Left cardiac atrium (tissue), 4 donors: ENCODE measurements at regions of chr6 and their contacts with region 1.

Region 1: GRCh38 chr6:142236691-142237090 is 65.1 kb upstream of the ADGRG6 start:
- DNase-seq: no peak
- ATAC-seq: no peak

Region 2: DNA sequence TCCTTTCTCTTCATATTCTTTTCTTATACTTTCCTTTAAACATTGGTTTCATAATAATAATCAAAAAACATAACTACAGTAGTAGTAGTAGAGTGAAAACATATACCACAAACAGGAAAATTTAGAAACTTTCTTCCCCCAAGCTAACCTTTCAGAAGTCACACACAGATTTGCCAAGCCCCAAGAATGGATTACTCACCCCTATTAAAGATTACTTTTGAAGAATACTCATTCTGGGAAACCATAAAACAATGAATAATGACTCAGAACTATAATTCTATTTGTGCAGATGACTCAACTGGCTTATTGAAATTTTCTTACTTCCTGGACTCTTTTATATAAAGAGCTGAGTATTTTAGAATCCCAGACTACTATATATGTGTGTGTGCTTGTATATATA is 223.4 kb before region 1 on chr6:
- intact Hi-C with region 1: no loop called
- DNase-seq: no peak
- ATAC-seq: no peak

Region 3: DNA sequence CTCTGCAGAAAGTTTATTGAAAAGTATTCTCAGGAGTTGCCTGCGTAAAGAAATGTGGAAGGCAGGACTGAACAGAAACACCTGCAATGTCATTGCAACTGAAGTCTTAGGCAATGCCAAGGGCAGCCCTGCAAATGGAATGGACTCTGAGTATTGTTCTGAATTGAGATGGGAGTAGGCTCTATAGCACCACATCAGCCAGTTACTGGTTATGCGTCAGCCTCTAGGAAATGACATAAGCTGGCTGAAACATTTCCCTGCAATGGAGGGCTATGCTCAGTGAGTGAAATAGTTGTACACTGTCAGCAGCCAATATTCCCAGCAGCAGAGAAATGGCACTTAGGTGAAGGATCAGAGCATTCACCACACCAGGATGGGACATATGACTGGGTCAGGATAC is 117.8 kb before region 1 on chr6:
- intact Hi-C with region 1: no loop called
- DNase-seq: no peak
- ATAC-seq: no peak

Region 4: DNA sequence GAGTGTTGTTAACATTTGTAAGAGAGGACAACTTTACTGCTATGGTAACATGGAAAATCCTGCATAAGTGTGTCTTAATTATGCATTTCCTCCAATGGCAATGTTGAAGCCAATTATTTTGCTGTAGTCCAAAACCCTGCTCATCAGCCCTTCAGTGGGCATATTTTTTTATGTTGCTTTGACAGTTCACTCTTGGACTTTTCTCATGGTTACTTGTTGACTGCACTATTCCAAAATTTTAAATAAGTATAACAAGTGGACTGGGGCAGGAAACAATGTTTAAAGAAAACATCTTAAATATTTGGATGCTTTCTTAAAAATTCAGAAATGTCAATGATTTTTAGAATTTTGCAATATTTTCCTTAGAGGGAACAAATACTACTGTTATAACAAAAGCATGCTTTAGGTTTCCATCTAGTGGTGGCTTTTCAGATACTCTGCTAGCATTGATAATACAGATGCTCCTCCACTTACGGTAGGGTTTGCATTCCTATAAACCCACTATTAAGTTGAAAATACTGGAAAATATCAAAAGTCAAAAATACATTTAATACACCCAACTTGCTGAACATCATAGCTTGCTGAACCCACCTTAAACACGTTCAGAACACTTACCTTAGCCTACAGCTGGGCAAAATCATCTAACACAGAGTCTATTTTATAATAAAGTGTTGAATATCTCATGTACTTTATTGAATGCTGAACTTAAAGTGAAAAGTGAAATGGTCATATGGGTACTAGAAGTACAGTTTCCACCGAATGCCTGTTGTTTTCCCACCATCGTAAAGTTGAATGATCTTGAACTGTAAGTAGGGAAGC is 151.5 kb after region 1 on chr6:
- intact Hi-C with region 1: loop called in 1 of 2 experiments (anchors 10 kb)
- DNase-seq: no peak
- ATAC-seq: peak in 1 of 2 donors; percentile 59